HepG2 (cell line): ENCODE measurements at regions of chr2 and their contacts with region 1.

Region 1: GRCh38 chr2:28751252-28751955 is at the start of gene PPP1CB:
- DNase-seq: peak; percentile 93
- ATAC-seq: peak; percentile 92
- H3K4me3 ChIP-seq: peak within 1 kb of the TSS; percentile 91 to 98 (median 95)
- H3K27ac ChIP-seq: peak within 1 kb of the TSS; percentile 96
- H3K4me1 ChIP-seq: peaks cover 41% of the 10 kb centered on the region
- H3K27me3 ChIP-seq: no peaks in the 10 kb centered on the region; a peak in 1 of 5 replicates
- CTCF ChIP-seq: peak; percentile 67
- EP300 ChIP-seq: peak; percentile 4 to 31; a peak in 1 of 4 replicates
- POLR2A ChIP-seq: peak; percentile 83 to 93
- RAD21 ChIP-seq: peak; percentile 49; the same call in 1 of the 2 replicates
- total RNA-seq, gene PPP1CB: 109 and 209 TPM in 2 replicates

Region 2: DNA sequence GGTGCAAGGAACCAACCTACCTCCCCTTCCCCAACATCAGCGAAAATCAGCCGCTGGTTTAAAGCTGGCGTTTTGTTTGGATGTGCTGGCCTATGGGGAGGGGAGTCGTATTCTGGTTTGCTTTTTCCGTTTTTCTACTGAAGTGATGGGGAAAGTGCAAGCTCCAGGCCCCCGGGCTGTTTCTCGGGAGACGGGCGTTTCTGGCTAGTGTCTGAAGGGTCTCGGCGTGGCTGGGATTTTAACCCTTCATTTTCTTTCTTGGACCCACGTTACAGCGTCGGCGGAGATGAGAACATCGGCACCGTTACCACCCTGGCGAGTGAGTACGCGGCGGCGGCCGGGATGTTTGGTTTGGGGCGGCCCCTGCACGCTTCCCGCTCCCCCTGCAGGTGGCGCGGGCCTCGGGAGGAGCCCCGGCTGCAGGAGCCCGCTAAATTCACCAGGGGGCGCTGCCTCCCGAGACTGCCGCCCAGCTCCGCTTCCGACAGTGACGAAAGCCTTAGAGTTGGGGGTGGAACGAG is 184.8 kb before region 1 on chr2:
- CTCF ChIA-PET with region 1: interaction called, 32 read pairs
- POLR2A ChIA-PET with region 1: interaction called, 3 read pairs
- in situ Hi-C with region 1: no loop called
- intact Hi-C with region 1: loop called (anchors 1 kb)
- DNase-seq: peak; percentile 65
- ATAC-seq: peak; percentile 96
- H3K4me3 ChIP-seq: peak overlapping the region; percentile 54 to 77 (median 69)
- H3K27ac ChIP-seq: no peak overlapping the region
- H3K4me1 ChIP-seq: peaks cover 7% of the 10 kb centered on the region
- H3K27me3 ChIP-seq: peaks cover 0 to 28% of the 10 kb centered on the region in 2 experiments; a peak in 4 of 5 replicates
- CTCF ChIP-seq: peak; percentile 96
- EP300 ChIP-seq: 0 out of 4 replicates have a peak, but pooled peaks of 1 of the 2 experiments have one; percentile 53
- POLR2A ChIP-seq: no peak
- RAD21 ChIP-seq: peak; percentile 96

Region 3: GRCh38 chr2:28594289-28595108 is 156.9 kb before region 1 on chr2:
- CTCF ChIA-PET with region 1: interaction called, 12 read pairs
- POLR2A ChIA-PET with region 1: interaction called, 25 read pairs
- in situ Hi-C with region 1: loop called (anchors 10 kb)
- intact Hi-C with region 1: loop called (anchors 1 kb)
- DNase-seq: peak; percentile 72
- ATAC-seq: peak; percentile 83
- H3K4me3 ChIP-seq: peak overlapping the region in 1 of 3 experiments; percentile 31; a peak in 1 of 6 replicates
- H3K27ac ChIP-seq: no peak overlapping the region
- H3K4me1 ChIP-seq: peaks cover 16% of the 10 kb centered on the region
- H3K27me3 ChIP-seq: peaks cover 4 to 38% of the 10 kb centered on the region in 2 experiments; a peak in 4 of 5 replicates
- CTCF ChIP-seq: peak; percentile 95
- EP300 ChIP-seq: no peak
- POLR2A ChIP-seq: no peak
- RAD21 ChIP-seq: peak; percentile 82

Region 4: DNA sequence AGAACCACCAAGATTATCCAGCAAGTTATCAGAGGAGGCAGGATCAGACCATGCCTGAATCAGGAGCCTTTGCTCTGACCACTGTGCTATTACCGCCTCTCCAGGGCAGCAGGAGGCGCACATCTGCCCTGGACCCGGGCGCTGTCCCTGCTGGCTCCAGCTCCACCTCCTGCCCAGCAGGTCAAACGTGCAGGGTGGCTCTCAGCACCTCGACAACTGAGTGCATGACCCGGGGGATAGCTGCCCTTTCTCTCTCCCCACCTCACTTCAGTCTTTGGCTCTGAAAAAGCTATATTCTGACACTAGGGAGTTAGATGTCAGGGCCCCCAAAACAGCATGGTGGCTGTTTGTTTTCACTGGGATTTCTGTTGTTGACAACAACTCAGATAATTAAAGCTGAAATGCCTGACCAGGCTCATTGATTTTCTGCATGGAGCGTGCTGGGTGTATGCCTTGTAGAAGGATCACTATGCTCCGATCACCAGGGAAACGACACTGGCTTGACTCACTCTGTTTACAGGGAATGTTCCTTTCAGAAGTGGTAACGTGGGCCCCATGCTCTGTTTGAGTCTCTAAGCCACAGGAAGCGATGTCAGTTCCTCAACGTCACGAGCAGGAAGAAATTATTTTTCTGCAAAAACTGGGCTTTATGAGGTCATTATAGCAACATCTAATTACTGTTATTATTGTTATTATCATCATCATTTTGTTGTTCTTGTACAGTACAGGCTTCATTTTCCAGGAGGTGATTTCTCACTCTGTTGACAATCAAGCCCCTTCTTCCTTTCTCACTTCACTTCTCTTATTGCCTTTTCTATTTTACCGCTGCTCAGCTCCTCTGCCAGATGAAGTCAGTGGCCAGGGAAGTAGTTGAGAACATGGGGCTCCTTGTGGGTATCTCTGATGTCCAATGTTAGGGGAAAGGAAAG is 130.0 kb before region 1 on chr2:
- CTCF ChIA-PET with region 1: no interaction called
- POLR2A ChIA-PET with region 1: interaction called, 5 read pairs
- in situ Hi-C with region 1: no loop called
- intact Hi-C with region 1: loop called (anchors 1 kb)
- DNase-seq: peak; percentile 83
- ATAC-seq: peak; percentile 91
- H3K4me3 ChIP-seq: peak overlapping the region in 2 of 3 experiments; percentile 3 to 54; a peak in 4 of 6 replicates
- H3K27ac ChIP-seq: peak overlapping the region; percentile 61
- H3K4me1 ChIP-seq: peaks cover 59% of the 10 kb centered on the region
- H3K27me3 ChIP-seq: no peaks in the 10 kb centered on the region; a peak in 1 of 5 replicates
- CTCF ChIP-seq: peak; percentile 94
- EP300 ChIP-seq: peak in 1 of 2 experiments; percentile 69; a peak in 1 of 4 replicates
- POLR2A ChIP-seq: no peak
- RAD21 ChIP-seq: peak; percentile 90

Region 5: GRCh38 chr2:28761420-28761819 is 10.0 kb after region 1 on chr2:
- CTCF ChIA-PET with region 1: no interaction called
- POLR2A ChIA-PET with region 1: interaction called, 14 read pairs
- in situ Hi-C with region 1: no loop called
- intact Hi-C with region 1: no loop called
- DNase-seq: no peak
- ATAC-seq: no peak
- H3K4me3 ChIP-seq: no peak overlapping the region
- H3K27ac ChIP-seq: no peak overlapping the region
- H3K4me1 ChIP-seq: peaks cover 12% of the 10 kb centered on the region; the same call in 1 of the 2 replicates
- H3K27me3 ChIP-seq: no peaks in the 10 kb centered on the region
- CTCF ChIP-seq: no peak
- EP300 ChIP-seq: no peak
- POLR2A ChIP-seq: no peak
- RAD21 ChIP-seq: no peak

Region 6: DNA sequence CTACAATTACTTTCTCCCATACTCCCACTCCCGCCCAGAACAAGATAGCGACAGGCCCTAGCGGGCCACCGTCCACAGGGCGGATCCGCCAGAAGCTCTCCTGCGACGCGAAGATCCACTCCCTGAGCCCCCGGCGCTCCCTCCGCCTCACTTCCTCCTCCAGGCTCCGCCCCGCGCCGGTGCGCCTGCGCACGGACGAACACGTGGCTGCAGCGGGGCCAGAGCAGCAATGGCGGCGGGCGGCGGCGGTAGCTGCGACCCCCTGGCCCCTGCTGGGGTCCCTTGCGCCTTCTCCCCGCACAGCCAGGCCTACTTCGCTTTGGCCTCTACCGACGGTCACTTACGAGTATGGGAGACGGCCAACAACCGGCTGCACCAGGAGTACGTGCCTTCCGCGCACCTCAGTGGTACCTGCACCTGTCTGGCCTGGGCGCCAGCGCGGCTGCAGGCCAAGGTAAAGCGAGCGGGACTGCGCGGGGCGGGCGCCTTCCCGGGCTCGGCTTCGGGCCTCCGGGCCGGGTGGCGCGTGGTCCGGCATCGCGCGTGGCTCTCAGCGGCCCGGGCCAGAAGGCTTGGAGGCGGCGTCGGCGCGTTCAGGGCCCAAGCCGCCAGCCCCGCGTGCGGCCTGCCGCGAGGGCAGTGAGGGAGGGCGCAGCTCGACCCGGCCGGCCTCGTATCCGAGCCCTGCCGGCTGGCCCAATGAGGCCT is 143.2 kb after region 1 on chr2 and contains the start of gene WDR43:
- CTCF ChIA-PET with region 1: no interaction called
- POLR2A ChIA-PET with region 1: interaction called, 11 read pairs
- in situ Hi-C with region 1: no loop called
- intact Hi-C with region 1: no loop called
- DNase-seq: peak; percentile 99
- ATAC-seq: peak; percentile 98
- H3K4me3 ChIP-seq: peak within 1 kb of the TSS; percentile 82 to 100 (median 91)
- H3K27ac ChIP-seq: peak within 1 kb of the TSS; percentile 90
- H3K4me1 ChIP-seq: peaks cover 36% of the 10 kb centered on the region
- H3K27me3 ChIP-seq: no peaks in the 10 kb centered on the region; a peak in 1 of 5 replicates
- CTCF ChIP-seq: no peak
- EP300 ChIP-seq: peak in 1 of 2 experiments; percentile 10; a peak in 1 of 4 replicates
- POLR2A ChIP-seq: peak; percentile 88 to 97
- RAD21 ChIP-seq: peak; percentile 46; the same call in 1 of the 2 replicates
- total RNA-seq, gene WDR43: 167 and 253 TPM in 2 replicates